ENCODE measurements at regions of chr7 and their contacts with region 1.

Region 1: DNA sequence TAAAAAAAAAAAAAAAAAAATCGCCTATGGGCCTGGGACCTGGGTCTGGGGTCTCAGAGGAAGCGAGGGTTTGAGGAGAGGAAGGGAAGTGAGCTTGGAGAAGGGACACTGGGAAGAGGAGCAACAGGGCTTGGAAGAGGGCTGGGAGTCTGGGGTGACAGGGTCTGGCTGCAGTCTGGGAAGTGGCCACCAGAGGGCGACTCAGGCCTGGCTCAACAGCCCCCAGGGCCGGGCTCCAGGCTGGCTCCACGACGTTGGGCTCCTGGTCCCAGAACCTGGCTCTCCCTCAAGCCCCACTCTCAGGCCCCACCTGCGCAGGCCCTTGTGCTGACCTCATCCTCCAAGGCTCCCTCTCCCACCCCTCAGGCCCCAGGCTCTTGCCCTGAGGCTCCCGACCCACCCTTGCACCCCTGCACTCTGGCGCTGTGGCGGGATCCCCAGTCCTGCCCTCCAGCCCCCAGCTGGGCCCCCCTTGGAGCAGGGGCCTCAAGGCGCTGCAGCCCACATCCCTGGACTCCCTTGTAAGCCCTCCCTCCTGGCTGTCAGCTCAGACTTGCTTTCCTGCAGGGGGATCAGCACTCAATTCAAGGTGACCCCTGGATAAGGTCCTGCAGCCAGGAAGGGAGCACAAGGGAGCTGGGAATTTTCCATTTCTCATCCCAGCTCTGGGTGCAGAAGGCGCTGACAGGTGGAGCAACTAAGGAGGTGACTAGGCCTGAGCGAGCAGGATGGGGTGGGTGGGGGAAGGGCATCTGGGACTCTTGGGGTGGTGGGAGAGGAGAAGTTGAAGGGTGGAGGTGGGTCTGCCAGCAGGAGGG is 5.4 kb upstream of the SPACDR start:
- DNase-seq: no peak
- ATAC-seq: peak; percentile 94
- H3K4me3 ChIP-seq: no peak overlapping the region
- H3K27ac ChIP-seq: no peak overlapping the region
- H3K4me1 ChIP-seq: peaks cover 12% of the 10 kb centered on the region
- H3K27me3 ChIP-seq: no peaks in the 10 kb centered on the region
- CTCF ChIP-seq: peak; percentile 95 to 96 (median 96)
- EP300 ChIP-seq: no peak
- POLR2A ChIP-seq: peak; percentile 63; the same call in 1 of the 2 replicates
- RAD21 ChIP-seq: peak; percentile 85

Region 2: DNA sequence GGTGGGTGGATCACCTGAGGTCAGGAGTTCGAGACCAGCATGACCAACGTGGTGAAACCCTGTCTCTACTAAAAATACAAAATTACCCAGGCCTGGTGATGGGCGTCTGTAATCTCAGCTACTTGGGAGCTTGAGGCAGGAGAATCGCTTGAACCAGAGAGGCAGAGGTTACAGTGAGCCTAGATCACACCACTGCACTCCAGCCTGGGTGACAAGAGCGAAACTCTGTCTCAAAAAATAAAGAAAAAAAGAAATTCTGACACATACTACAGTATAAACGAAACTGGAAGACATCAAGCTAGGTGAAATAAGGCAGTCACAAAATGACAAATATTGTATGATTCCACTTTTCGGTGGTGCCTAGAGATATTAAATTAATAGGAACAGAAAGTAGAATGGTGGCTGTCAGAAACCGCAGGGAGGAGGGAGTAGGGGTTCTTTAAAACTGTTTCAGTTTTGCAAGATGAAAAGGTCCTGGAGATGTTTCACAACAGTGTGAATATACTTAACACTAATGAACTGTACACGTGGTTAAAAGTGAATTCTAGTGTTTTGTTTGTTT is 72.9 kb before region 1 on chr7:
- CTCF ChIA-PET with region 1: no interaction called
- POLR2A ChIA-PET with region 1: no interaction called
- RAD21 ChIA-PET with region 1: no interaction called
- SMC1A ChIA-PET with region 1: no interaction called
- in situ Hi-C with region 1: no loop called
- intact Hi-C with region 1: no loop called
- DNase-seq: peak; percentile 93
- ATAC-seq: peak; percentile 92
- H3K4me3 ChIP-seq: peak overlapping the region; percentile 43; the same call in 1 of the 2 replicates
- H3K27ac ChIP-seq: peak overlapping the region; percentile 72
- H3K4me1 ChIP-seq: peaks cover 33% of the 10 kb centered on the region
- H3K27me3 ChIP-seq: no peaks in the 10 kb centered on the region
- CTCF ChIP-seq: no peak
- EP300 ChIP-seq: peak; percentile 63 to 92; a peak in 2 of 4 replicates
- POLR2A ChIP-seq: no peak
- RAD21 ChIP-seq: no peak

Region 3: DNA sequence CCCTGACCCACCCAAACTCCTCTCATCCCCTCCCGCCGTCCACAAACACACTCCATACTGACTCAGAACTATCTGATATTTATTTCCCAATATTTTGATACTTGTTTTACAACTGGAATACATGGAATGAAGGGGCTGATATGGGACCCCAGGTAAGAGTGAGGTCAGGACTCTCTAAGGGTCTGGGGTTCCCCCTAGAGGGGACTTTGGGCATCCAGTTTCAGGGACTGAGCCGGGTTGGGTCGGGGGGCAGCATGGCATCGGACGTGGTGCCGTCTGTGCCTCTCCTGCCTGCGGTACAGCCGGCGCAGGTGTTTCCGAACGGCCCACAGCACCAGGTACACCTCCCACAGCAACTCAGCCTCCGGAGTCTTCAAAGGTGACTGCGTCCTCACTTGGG is 12.9 kb before region 1 on chr7:
- CTCF ChIA-PET with region 1: interaction called, 13 read pairs
- POLR2A ChIA-PET with region 1: interaction called, 6 read pairs
- RAD21 ChIA-PET with region 1: interaction called, 4 read pairs
- SMC1A ChIA-PET with region 1: interaction called, 7 read pairs
- in situ Hi-C with region 1: no loop called
- intact Hi-C with region 1: no loop called
- DNase-seq: no peak
- ATAC-seq: no peak
- H3K4me3 ChIP-seq: no peak overlapping the region
- H3K27ac ChIP-seq: no peak overlapping the region
- H3K4me1 ChIP-seq: no peaks in the 10 kb centered on the region; the same call in 1 of the 2 replicates
- H3K27me3 ChIP-seq: no peaks in the 10 kb centered on the region
- CTCF ChIP-seq: no peak
- EP300 ChIP-seq: no peak
- POLR2A ChIP-seq: no peak
- RAD21 ChIP-seq: no peak

Region 4: GRCh38 chr7:100506356-100506923 is 37.0 kb after region 1 on chr7:
- CTCF ChIA-PET with region 1: no interaction called
- POLR2A ChIA-PET with region 1: no interaction called
- RAD21 ChIA-PET with region 1: no interaction called
- SMC1A ChIA-PET with region 1: no interaction called
- in situ Hi-C with region 1: no loop called
- intact Hi-C with region 1: no loop called
- DNase-seq: no peak
- ATAC-seq: no peak
- H3K4me3 ChIP-seq: no peak overlapping the region
- H3K27ac ChIP-seq: no peak overlapping the region
- H3K4me1 ChIP-seq: no peaks in the 10 kb centered on the region; the same call in 1 of the 2 replicates
- H3K27me3 ChIP-seq: no peaks in the 10 kb centered on the region
- CTCF ChIP-seq: no peak
- EP300 ChIP-seq: no peak
- POLR2A ChIP-seq: no peak
- RAD21 ChIP-seq: no peak